ENCODE measurements at regions of chr13 and their contacts with region 1.

Region 1: GRCh38 chr13:27449936-27450828 is at the start of gene MTIF3:
- DNase-seq: peak; percentile 91 to 96
- ATAC-seq: peak; percentile 79 to 85
- H3K4me3 ChIP-seq: peak within 1 kb of the TSS; percentile 57 to 93 (median 75)
- H3K27ac ChIP-seq: peak within 1 kb of the TSS; percentile 88 to 97 (median 93)
- H3K4me1 ChIP-seq: peaks cover 33 to 47% of the 10 kb centered on the region in 2 donors
- H3K27me3 ChIP-seq: no peaks in the 10 kb centered on the region
- CTCF ChIP-seq: no peak
- POLR2A ChIP-seq: peak; percentile 60 to 78
- total RNA-seq, gene MTIF3: 73.9 to 113 (median 89.1) TPM

Region 2: GRCh38 chr13:27171827-27172494 is 278.2 kb before region 1 on chr13:
- in situ Hi-C with region 1: loop called in 1 of 4 experiments (anchors 10 kb)
- intact Hi-C with region 1: loop called (anchors 5 kb)
- DNase-seq: peak; percentile 86 to 91
- ATAC-seq: peak; percentile 79 to 80
- H3K4me3 ChIP-seq: peak overlapping the region; percentile 70 to 85 (median 84)
- H3K27ac ChIP-seq: peak overlapping the region; percentile 88 to 94 (median 89)
- H3K4me1 ChIP-seq: peaks cover 36 to 39% of the 10 kb centered on the region in 2 donors
- H3K27me3 ChIP-seq: no peaks in the 10 kb centered on the region
- CTCF ChIP-seq: peak in 2 of 5 experiments; percentile 36 to 47
- POLR2A ChIP-seq: no peak

Region 3: DNA sequence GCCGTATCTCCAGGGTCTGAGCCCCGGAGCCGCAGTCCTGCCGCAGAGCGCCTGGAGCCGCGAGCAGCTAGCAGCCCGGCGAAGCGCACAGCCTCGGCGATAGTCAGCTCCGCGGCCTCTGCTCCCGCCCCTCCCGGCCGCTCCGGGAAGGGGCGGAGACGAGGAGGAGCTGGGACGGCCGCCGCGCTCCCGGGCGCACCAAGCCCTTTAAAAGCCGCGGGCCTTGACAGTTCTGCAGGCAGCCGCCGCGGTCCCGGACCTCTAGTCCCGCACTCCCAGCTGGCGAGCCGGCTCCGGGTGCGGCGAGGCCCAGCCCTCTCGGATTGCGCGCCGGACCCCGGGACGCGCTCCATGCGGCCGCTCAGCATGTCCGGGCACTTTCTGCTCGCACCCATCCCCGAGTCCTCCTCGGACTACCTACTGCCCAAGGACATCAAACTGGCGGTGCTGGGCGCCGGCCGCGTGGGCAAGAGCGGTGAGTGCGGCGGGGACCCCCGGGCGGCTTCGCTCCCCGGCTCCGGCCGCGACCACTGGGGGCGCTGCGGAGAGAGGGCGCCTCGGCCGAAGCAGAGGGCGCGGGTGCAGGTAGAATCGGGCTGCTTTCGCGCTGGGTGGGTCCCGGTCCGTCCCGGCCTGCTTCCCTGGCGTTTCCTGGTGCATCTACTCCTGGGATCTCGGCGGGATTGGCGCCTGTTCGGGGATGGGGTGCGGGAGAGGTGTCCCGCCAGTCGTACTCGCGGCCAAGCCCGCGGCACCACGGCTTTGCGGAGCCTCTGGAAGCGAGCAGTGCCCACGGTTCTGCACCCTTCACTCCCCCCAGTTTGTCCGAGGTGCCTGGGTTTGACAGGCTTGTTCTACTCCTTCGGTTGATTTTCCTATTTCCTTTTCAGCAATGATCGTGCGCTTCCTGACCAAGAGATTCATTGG is 179.3 kb before region 1 on chr13 and contains the start of gene RASL11A:
- in situ Hi-C with region 1: loop called in 2 of 4 experiments (anchors 25 kb)
- intact Hi-C with region 1: no loop called
- DNase-seq: peak; percentile 57 to 71
- ATAC-seq: peak; percentile 86 to 90
- H3K4me3 ChIP-seq: peak within 1 kb of the TSS; percentile 65 to 91 (median 74)
- H3K27ac ChIP-seq: peak within 1 kb of the TSS; percentile 75 to 86 (median 84)
- H3K4me1 ChIP-seq: peaks cover 4 to 6% of the 10 kb centered on the region in 2 donors
- H3K27me3 ChIP-seq: no peaks in the 10 kb centered on the region
- CTCF ChIP-seq: peak; percentile 84 to 96 (median 87)
- POLR2A ChIP-seq: peak; percentile 61 to 87
- total RNA-seq, gene RASL11A: 2.8 to 9.0 (median 5.7) TPM

Region 4: DNA sequence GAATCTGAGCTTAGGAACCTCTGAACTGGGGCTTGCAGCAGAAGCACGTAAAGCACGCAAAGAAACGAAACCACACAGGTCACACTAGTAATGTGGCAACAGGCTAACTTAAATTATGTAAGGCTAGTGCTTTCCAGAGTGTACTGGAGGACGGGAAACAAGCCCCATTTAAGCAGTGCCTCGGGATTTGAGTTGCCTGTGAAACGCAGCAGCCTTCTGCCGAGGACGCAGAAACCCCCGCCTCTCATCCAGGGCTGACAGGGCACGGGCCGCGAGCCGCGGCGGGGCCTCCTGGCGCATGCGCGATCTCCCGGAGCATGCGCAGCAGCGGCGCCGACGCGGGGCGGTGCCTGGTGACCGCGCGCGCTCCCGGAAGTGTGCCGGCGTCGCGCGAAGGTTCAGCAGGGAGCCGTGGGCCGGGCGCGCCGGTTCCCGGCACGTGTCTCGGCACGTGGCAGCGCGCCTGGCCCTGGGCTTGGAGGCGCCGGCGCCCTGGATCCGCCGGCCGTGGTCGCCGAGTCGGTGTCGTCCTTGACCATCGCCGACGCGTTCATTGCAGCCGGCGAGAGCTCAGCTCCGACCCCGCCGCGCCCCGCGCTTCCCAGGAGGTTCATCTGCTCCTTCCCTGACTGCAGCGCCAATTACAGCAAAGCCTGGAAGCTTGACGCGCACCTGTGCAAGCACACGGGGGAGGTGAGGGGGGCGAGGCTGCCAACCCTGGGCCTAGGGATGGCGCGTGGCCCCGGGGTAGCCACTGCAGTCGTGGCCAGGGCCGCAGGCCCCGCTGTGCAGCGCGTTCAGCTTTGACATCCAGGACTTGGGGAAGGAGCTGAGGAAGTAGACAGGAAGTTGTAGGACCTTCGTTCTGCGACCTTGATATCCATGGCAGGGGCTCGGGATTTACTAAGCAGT is 25.7 kb before region 1 on chr13 and contains the start of gene GTF3A:
- in situ Hi-C with region 1: no loop called
- intact Hi-C with region 1: loop called (anchors 1 kb)
- DNase-seq: peak; percentile 71 to 82
- ATAC-seq: peak; percentile 72 to 77
- H3K4me3 ChIP-seq: peak within 1 kb of the TSS; percentile 67 to 86 (median 77)
- H3K27ac ChIP-seq: peak within 1 kb of the TSS; percentile 92 to 97 (median 96)
- H3K4me1 ChIP-seq: peaks cover 30 to 36% of the 10 kb centered on the region in 2 donors
- H3K27me3 ChIP-seq: no peaks in the 10 kb centered on the region
- CTCF ChIP-seq: peak in 1 of 5 experiments; percentile 22
- POLR2A ChIP-seq: peak; percentile 87 to 88
- total RNA-seq, gene GTF3A: 179 to 304 (median 242) TPM

Region 5: GRCh38 chr13:27556109-27556508 is 105.9 kb after region 1 on chr13:
- in situ Hi-C with region 1: no loop called
- intact Hi-C with region 1: no loop called
- DNase-seq: peak in 1 of 2 donors; percentile 17
- ATAC-seq: peak in 1 of 2 donors; percentile 46
- H3K4me3 ChIP-seq: no peak overlapping the region
- H3K27ac ChIP-seq: no peak overlapping the region
- H3K4me1 ChIP-seq: no peaks in the 10 kb centered on the region
- H3K27me3 ChIP-seq: no peaks in the 10 kb centered on the region
- CTCF ChIP-seq: peak in 2 of 5 experiments; percentile 29 to 35
- POLR2A ChIP-seq: no peak

Region 6: GRCh38 chr13:27620377-27621115 is 170.4 kb after region 1 on chr13 and contains the start of gene LNX2:
- in situ Hi-C with region 1: loop called in 1 of 4 experiments (anchors 25 kb)
- intact Hi-C with region 1: loop called (anchors 1 kb)
- DNase-seq: peak; percentile 98 to 99
- ATAC-seq: peak; percentile 72 to 73
- H3K4me3 ChIP-seq: peak within 1 kb of the TSS; percentile 69 to 98 (median 90)
- H3K27ac ChIP-seq: peak within 1 kb of the TSS; percentile 95 to 100 (median 99)
- H3K4me1 ChIP-seq: peaks cover 30 to 44% of the 10 kb centered on the region in 2 donors
- H3K27me3 ChIP-seq: no peaks in the 10 kb centered on the region
- CTCF ChIP-seq: peak in 2 of 5 experiments; percentile 24 to 29
- POLR2A ChIP-seq: peak; percentile 92 to 94
- total RNA-seq, gene LNX2: 5.0 to 7.1 (median 6.2) TPM